ENCODE measurements at regions of chr22 and their contacts with region 1.

Region 1: DNA sequence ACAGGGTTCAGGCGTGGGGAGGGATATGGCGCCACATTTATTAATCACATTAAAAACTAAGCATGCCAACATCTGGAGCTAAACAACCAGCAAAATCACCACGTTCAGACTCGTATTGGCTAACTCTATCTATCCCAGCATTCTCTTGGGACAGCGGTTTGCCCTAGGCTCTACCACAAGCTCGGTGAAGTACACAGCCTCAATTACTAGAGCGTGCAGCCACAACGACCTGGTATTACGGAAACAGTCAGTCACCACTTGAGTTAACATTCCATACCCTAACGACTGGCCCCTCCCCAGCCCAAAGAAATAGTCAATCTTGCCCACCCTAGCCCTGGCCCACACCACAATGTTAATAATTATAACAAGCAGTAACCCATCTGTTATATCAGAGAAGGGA is 32.1 kb downstream of the APOL5 start:
- DNase-seq: no peak
- ATAC-seq: no peak

Region 2: DNA sequence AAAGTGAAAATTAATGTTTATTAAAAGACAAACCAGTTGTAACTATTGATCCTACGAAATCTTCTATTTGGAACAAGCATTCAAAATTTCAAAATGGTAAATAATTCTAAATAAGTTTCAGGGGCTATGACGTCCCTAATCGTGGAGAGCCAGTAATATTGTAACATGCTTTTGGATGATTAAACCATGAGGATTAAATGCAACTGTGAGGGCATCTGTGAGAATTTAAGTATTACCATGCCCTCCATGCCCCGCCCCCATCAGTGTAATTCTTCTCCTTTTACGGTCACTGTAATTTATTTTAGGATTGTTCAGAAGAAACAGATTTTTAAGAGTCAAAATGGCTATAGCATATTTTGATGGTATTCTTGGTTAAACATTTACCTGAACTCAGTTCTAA is 101.0 kb after region 1 on chr22:
- intact Hi-C with region 1: loop called in 1 of 2 experiments (anchors 10 kb)
- DNase-seq: no peak
- ATAC-seq: no peak

Region 3: GRCh38 chr22:36065775-36066559 is 316.2 kb after region 1 on chr22:
- intact Hi-C with region 1: loop called in 1 of 2 experiments (anchors 10 kb)
- DNase-seq: peak; percentile 95
- ATAC-seq: peak; percentile 93 to 94